ENCODE measurements at regions of chr14 and their contacts with region 1.

Region 1: GRCh38 chr14:53180268-53181221 is 27.4 kb upstream of the DDHD1 start:
- DNase-seq: peak; percentile 23
- CTCF ChIP-seq: peak; percentile 26

Region 2: GRCh38 chr14:52808101-52808500 is 372.4 kb before region 1 on chr14:
- CTCF ChIA-PET with region 1: no interaction called
- POLR2A ChIA-PET with region 1: no interaction called
- DNase-seq: no peak
- CTCF ChIP-seq: no peak

Region 3: GRCh38 chr14:53016490-53016889 is 164.1 kb before region 1 on chr14:
- CTCF ChIA-PET with region 1: no interaction called
- POLR2A ChIA-PET with region 1: no interaction called
- DNase-seq: no peak
- CTCF ChIP-seq: no peak

Region 4: DNA sequence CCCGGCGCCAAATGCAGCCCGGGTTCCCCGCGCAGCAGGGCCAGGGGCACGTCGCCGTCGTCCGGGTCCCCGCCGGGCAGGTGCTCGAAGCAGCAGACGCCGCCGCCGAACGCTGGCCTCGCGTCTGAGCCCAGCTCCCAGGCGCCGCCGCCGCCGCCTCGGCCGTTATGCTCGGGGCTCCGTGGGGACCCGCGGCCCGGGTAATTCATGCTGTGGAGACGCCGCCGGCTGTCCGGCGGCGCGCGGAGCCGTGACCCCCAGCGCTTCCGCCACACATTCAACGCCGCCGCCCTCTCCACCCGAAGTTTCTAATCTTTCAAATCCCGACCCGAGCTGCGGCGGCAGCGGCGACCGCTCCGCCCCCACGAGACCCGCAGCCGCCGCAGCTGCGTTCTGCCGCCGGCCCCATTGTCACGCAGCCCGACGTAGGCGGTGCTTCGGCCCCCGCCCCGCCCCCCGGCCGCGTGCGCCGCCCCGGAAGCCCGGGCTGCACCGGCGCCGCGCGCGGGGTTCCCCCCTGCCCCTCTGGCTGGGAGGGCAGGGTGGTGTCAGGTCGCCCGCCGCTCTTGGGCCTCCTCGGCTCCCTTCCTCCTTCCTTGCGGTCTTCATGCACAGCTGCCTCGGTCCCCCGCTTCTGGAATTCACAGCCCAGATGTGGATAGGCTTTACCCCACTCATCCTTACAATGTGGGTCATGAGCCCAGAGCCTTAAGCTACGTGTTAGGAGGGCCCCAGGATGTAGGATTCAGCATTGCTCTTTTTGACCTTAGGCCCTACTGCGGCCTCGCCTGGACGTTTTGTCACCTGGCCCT is 27.4 kb before region 1 on chr14 and contains the start of gene DDHD1:
- CTCF ChIA-PET with region 1: interaction called, 11 read pairs
- POLR2A ChIA-PET with region 1: no interaction called
- DNase-seq: peak; percentile 93
- CTCF ChIP-seq: no peak

Region 5: DNA sequence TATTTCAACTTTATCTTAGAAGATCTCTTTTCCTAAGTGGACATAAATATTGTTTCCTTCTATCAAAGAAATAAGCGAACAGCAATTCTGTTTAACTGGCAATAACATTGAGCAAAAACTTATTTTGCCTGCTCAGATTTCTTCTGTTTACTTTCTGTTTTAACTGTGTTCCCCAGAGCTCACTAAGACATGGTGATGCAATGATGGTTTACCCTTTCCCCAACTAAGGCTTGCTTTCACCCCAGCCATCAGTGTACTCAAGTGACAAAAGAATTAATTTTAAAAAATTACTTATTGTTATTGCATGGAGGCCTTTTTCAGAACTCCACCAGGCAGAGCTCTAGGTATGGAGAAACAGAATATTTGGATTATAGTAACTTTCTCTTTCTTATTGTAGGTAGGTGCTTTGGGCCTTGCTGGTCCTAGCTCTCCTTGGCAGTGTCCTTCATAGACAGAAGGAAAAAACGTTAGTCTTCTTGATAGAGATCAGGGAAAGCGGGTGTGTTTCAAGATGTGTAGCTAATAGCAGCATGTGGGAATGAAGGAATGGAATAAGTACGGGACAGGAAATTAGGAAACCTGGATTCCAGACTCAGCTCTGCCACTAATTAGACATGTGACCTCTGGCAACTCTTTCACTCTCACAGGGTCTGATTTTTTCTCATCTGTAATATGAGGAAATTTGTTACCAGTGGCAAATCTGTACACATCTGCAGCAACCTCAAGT is 12.8 kb before region 1 on chr14:
- CTCF ChIA-PET with region 1: interaction called, 13 read pairs
- POLR2A ChIA-PET with region 1: interaction called, 3 read pairs
- DNase-seq: no peak
- CTCF ChIP-seq: no peak

Region 6: GRCh38 chr14:53444677-53445312 is 264.2 kb after region 1 on chr14:
- CTCF ChIA-PET with region 1: no interaction called
- POLR2A ChIA-PET with region 1: no interaction called
- DNase-seq: no peak
- CTCF ChIP-seq: no peak